Activated CD4-positive, alpha-beta memory T cell treated with anti-CD3 and anti-CD28 coated beads, Interleukin-2, amount 10 ng/mL, durations not matched to agents 7 days and 5 days (primary cell): ENCODE measurements at regions of chr17 and their contacts with region 1.

Region 1: DNA sequence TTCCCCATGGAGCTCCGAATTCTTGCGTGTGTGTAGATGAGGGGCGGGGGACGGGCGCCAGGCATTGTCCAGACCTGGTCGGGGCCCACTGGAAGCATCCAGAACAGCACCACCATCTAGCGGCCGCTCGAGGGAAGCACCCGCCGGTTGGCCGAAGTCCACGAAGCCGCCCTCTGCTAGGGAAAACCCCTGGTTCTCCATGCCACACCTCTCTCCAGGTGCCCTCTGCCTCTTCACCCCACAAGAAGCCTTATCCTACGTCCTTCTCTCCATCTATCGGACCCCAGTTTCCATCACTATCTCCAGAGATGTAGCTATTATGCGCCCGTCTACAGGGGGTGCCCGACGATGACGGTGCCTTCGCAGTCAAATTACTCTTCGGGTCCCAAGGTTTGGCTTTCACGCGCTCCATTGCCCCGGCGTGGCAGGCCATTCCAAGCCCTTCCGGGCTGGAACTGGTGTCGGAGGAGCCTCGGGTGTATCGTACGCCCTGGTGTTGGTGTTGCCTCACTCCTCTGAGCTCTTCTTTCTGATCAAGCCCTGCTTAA is 617 bp upstream of the SENP3 start:
- DNase-seq: peak; percentile 85
- H3K4me3 Mint-ChIP-seq: peak overlapping the region; percentile 91
- H3K27ac Mint-ChIP-seq: peak overlapping the region; percentile 93
- H3K4me1 Mint-ChIP-seq: peaks cover 52% of the 10 kb centered on the region
- H3K27me3 Mint-ChIP-seq: no peaks in the 10 kb centered on the region

Region 2: GRCh38 chr17:6713130-6713917 is 847.8 kb before region 1 on chr17 and contains the start of gene SLC13A5:
- CTCF ChIA-PET with region 1: no interaction called
- POLR2A ChIA-PET with region 1: no interaction called
- DNase-seq: no peak
- H3K4me3 Mint-ChIP-seq: no peak within 1 kb of the TSS
- H3K27ac Mint-ChIP-seq: no peak within 1 kb of the TSS
- H3K4me1 Mint-ChIP-seq: peaks cover 16% of the 10 kb centered on the region
- H3K27me3 Mint-ChIP-seq: peaks cover 67% of the 10 kb centered on the region
- total RNA-seq, gene SLC13A5: not detected

Region 3: DNA sequence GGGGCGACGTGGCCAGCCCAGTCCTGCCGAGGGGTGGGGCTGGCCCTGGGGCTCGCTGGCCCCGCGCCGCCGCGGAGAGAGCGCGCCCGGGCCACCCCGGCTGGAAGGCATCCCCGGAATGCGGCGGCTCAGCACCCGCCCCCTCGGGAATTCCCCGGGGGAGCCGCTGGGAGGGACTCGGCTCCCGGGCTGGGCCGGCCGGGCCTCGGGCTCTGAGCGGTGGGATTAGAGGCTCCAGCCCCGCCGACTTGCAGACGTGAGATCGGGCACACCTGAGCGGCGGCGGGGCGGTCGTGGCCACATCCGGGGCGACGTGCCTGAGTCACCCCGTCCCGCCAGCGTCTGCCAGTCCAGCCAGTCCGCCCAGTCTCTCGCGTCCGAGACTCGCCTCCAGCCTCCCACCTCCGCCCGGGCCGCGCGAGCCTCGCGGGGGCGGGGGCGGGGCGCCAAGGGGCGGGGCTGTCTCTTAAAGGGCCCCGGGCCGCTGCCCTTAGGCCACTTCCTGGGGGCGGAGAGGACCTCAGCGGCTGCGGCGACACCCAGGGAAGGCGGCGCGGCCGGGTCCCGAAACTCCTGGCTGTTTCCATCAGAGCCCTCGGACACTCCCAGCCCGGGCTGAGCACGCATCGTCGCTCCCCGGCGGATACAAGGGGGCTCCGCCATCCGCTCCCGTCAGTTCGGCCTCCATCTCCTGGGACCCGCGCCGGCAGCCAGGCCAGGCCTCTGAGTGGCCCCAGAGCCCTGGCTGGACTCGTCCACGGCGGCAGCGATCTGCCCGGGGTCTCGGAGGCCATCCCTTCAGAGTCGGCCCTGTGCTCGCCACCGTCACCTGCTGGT is 209.2 kb before region 1 on chr17 and contains the start of gene KCTD11:
- CTCF ChIA-PET with region 1: interaction called, 24 read pairs
- POLR2A ChIA-PET with region 1: interaction called, 7 read pairs
- DNase-seq: peak; percentile 85
- H3K4me3 Mint-ChIP-seq: peak within 1 kb of the TSS; percentile 66
- H3K27ac Mint-ChIP-seq: peak within 1 kb of the TSS; percentile 70
- H3K4me1 Mint-ChIP-seq: peaks cover 73% of the 10 kb centered on the region
- H3K27me3 Mint-ChIP-seq: no peaks in the 10 kb centered on the region
- total RNA-seq, gene KCTD11: 5.8 to 5.9 TPM

Region 4: GRCh38 chr17:7484067-7484918 is 76.8 kb before region 1 on chr17 and contains the start of gene POLR2A:
- CTCF ChIA-PET with region 1: interaction called, 25 read pairs
- POLR2A ChIA-PET with region 1: interaction called, 30 read pairs
- DNase-seq: peak; percentile 97
- H3K4me3 Mint-ChIP-seq: peak within 1 kb of the TSS; percentile 87
- H3K27ac Mint-ChIP-seq: peak within 1 kb of the TSS; percentile 98
- H3K4me1 Mint-ChIP-seq: peaks cover 66% of the 10 kb centered on the region
- H3K27me3 Mint-ChIP-seq: no peaks in the 10 kb centered on the region
- total RNA-seq, gene POLR2A: 169 to 172 TPM

Region 5: GRCh38 chr17:7515911-7516610 is 45.0 kb before region 1 on chr17:
- CTCF ChIA-PET with region 1: interaction called, 207 read pairs
- POLR2A ChIA-PET with region 1: interaction called, 43 read pairs
- DNase-seq: no peak
- H3K4me3 Mint-ChIP-seq: no peak overlapping the region
- H3K27ac Mint-ChIP-seq: no peak overlapping the region
- H3K4me1 Mint-ChIP-seq: no peaks in the 10 kb centered on the region
- H3K27me3 Mint-ChIP-seq: no peaks in the 10 kb centered on the region

Region 6: GRCh38 chr17:7530023-7530900 is 30.8 kb before region 1 on chr17:
- CTCF ChIA-PET with region 1: interaction called, 207 read pairs
- POLR2A ChIA-PET with region 1: interaction called, 3 read pairs
- DNase-seq: no peak
- H3K4me3 Mint-ChIP-seq: no peak overlapping the region
- H3K27ac Mint-ChIP-seq: no peak overlapping the region
- H3K4me1 Mint-ChIP-seq: no peaks in the 10 kb centered on the region
- H3K27me3 Mint-ChIP-seq: peaks cover 5% of the 10 kb centered on the region

Region 7: DNA sequence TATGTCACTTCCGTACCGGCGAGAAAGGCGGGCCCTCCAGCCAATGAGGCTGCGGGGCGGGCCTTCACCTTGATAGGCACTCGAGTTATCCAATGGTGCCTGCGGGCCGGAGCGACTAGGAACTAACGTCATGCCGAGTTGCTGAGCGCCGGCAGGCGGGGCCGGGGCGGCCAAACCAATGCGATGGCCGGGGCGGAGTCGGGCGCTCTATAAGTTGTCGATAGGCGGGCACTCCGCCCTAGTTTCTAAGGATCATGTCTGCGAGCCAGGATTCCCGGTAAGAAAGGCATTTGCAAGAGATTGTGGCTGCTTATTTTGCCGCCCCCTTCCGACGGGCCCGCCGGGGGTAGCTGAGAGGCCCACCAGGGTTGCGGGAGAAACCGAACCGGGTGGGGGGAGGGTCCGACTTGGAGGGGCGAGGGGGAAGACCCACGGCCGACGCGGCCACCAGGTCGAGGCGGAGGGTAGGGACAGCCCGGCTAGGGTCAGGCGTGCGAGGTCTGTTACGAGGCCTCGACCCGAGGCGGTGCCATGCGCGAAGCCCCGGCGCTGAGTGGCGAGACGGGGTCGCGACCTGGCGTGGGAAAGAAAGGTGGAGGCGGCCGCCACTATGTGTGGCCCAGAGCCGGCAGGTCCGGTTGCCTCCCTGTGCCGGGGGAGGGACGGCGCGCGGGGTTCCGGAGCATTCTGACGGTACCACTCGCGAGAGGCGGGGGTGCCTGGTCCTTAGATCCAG is 11.7 kb after region 1 on chr17:
- CTCF ChIA-PET with region 1: interaction called, 21 read pairs
- POLR2A ChIA-PET with region 1: interaction called, 80 read pairs
- DNase-seq: peak; percentile 100
- H3K4me3 Mint-ChIP-seq: peak overlapping the region; percentile 93
- H3K27ac Mint-ChIP-seq: peak overlapping the region; percentile 99
- H3K4me1 Mint-ChIP-seq: peaks cover 63% of the 10 kb centered on the region
- H3K27me3 Mint-ChIP-seq: no peaks in the 10 kb centered on the region

Region 8: DNA sequence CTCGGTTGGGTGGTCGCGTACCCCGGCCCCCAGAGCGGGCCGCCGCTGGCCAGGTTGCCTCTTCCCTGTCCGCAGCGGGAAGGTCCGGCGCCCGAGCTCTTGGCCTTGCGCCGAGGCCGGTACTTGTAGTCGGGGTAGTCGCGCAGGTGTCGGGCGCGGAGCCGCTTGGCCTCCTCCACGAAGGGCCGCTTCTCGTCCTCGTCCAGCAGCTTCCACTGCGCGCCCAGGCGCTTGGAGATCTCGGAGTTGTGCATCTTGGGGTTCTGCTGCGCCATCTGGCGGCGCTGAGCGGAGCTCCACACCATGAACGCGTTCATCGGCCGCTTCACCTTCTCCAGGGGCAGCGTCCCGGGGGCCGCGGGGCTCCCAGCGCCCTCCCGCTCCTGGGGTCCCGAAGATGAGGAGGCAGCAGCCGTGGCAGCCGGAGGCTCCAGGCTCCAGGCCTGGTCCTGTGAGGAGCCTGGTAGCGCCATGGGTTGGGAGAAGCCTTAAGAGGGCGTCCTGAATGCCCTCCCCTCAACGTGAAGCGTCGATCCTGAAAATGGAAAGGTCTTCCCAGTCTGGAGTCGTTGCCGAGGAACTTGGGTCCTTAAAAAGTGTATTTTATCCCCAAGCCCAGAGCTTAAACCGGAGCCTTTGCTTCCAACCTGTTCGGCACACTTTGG is 28.2 kb after region 1 on chr17:
- CTCF ChIA-PET with region 1: interaction called, 17 read pairs
- POLR2A ChIA-PET with region 1: interaction called, 18 read pairs
- DNase-seq: peak; percentile 71
- H3K4me3 Mint-ChIP-seq: no peak overlapping the region
- H3K27ac Mint-ChIP-seq: peak overlapping the region; percentile 26
- H3K4me1 Mint-ChIP-seq: peaks cover 22% of the 10 kb centered on the region
- H3K27me3 Mint-ChIP-seq: no peaks in the 10 kb centered on the region

Region 9: GRCh38 chr17:7650509-7651096 is 89.5 kb after region 1 on chr17 and contains the start of gene ATP1B2:
- CTCF ChIA-PET with region 1: no interaction called
- POLR2A ChIA-PET with region 1: no interaction called
- DNase-seq: peak; percentile 75
- H3K4me3 Mint-ChIP-seq: peak within 1 kb of the TSS; percentile 63
- H3K27ac Mint-ChIP-seq: no peak within 1 kb of the TSS
- H3K4me1 Mint-ChIP-seq: peaks cover 17% of the 10 kb centered on the region
- H3K27me3 Mint-ChIP-seq: peaks cover 53% of the 10 kb centered on the region
- total RNA-seq, gene ATP1B2: 0.25 to 0.50 TPM